Common myeloid progenitor, CD34-positive (primary cell): ENCODE measurements at regions of chr19 and their contacts with region 1.

Region 1: GRCh38 chr19:6218491-6219162 is 61.1 kb downstream of the MLLT1 start:
- DNase-seq: peak; percentile 80 to 92 (median 87)
- H3K4me3 ChIP-seq: no peak overlapping the region
- H3K27ac ChIP-seq: no peak overlapping the region
- H3K4me1 ChIP-seq: peaks cover 0 to 5% (median 0%) of the 10 kb centered on the region in 4 experiments
- H3K27me3 ChIP-seq: no peaks in the 10 kb centered on the region

Region 2: GRCh38 chr19:6048808-6049405 is 169.7 kb before region 1 on chr19:
- CTCF ChIA-PET with region 1: interaction called, 12 read pairs
- POLR2A ChIA-PET with region 1: no interaction called
- DNase-seq: peak; percentile 77 to 87 (median 82)
- H3K4me3 ChIP-seq: peak overlapping the region in 1 of 7 experiments; percentile 39
- H3K27ac ChIP-seq: no peak overlapping the region
- H3K4me1 ChIP-seq: peaks cover 0 to 11% (median 10%) of the 10 kb centered on the region in 4 experiments
- H3K27me3 ChIP-seq: no peaks in the 10 kb centered on the region

Region 3: GRCh38 chr19:6183374-6183773 is 35.3 kb before region 1 on chr19:
- CTCF ChIA-PET with region 1: no interaction called
- POLR2A ChIA-PET with region 1: no interaction called
- DNase-seq: no peak
- H3K4me3 ChIP-seq: no peak overlapping the region
- H3K27ac ChIP-seq: no peak overlapping the region
- H3K4me1 ChIP-seq: peaks cover 0 to 2% (median 0%) of the 10 kb centered on the region in 4 experiments
- H3K27me3 ChIP-seq: no peaks in the 10 kb centered on the region

Region 4: GRCh38 chr19:6198066-6198415 is 20.6 kb before region 1 on chr19:
- CTCF ChIA-PET with region 1: no interaction called
- POLR2A ChIA-PET with region 1: no interaction called
- DNase-seq: no peak
- H3K4me3 ChIP-seq: peak overlapping the region in 1 of 7 experiments; percentile 28
- H3K27ac ChIP-seq: no peak overlapping the region
- H3K4me1 ChIP-seq: peaks cover 0 to 14% (median 10%) of the 10 kb centered on the region in 4 experiments
- H3K27me3 ChIP-seq: no peaks in the 10 kb centered on the region

Region 5: DNA sequence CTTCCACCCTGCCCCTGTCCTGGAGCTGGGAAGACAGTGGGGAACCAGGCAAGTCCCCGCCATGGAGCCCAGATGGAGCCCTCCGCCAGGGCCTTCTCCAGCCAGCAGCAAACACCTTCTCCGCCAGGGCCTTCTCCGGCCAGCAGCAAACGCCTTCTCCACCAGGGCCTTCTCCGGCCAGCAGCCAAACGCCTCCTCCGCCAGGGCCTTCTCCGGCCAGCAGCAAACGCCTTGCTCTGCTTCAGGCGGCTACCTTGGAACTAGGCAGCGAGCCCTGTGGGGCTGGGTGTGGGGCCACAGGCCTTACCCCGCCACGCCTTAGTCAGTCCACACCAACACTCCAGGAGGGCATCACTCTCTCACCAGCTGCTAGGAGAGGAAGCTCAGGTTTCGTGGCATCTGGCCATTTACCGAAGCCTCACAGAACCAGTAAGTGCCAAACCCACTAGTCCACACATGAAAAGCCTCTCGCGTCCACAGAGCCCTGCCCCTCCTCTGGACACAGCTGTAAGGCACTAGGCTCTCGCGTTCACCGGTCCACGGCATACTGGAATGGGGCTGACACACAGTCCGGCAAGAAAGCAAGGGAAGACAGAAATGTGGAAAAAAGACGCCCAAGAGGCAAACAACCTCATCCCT is 20.1 kb after region 1 on chr19:
- CTCF ChIA-PET with region 1: interaction called, 18 read pairs
- POLR2A ChIA-PET with region 1: interaction called, 4 read pairs
- DNase-seq: peak in 2 of 3 donors; percentile 62 to 75
- H3K4me3 ChIP-seq: peak overlapping the region in 3 of 7 experiments; percentile 4 to 32 (median 6)
- H3K27ac ChIP-seq: peak overlapping the region; percentile 28 to 41
- H3K4me1 ChIP-seq: peaks cover 5 to 70% (median 63%) of the 10 kb centered on the region in 4 experiments
- H3K27me3 ChIP-seq: no peaks in the 10 kb centered on the region

Region 6: GRCh38 chr19:6276447-6276846 is 57.8 kb after region 1 on chr19:
- CTCF ChIA-PET with region 1: interaction called, 14 read pairs
- POLR2A ChIA-PET with region 1: no interaction called
- DNase-seq: no peak
- H3K4me3 ChIP-seq: peak overlapping the region in 1 of 7 experiments; percentile 2
- H3K27ac ChIP-seq: peak overlapping the region in 1 of 2 experiments; percentile 49
- H3K4me1 ChIP-seq: peaks cover 4 to 70% (median 49%) of the 10 kb centered on the region in 4 experiments
- H3K27me3 ChIP-seq: no peaks in the 10 kb centered on the region

Region 7: GRCh38 chr19:6297202-6297601 is 78.6 kb after region 1 on chr19:
- CTCF ChIA-PET with region 1: interaction called, 32 read pairs
- POLR2A ChIA-PET with region 1: interaction called, 3 read pairs
- DNase-seq: no peak
- H3K4me3 ChIP-seq: no peak overlapping the region
- H3K27ac ChIP-seq: no peak overlapping the region
- H3K4me1 ChIP-seq: no peaks in the 10 kb centered on the region
- H3K27me3 ChIP-seq: no peaks in the 10 kb centered on the region